Right cardiac atrium (tissue), 5 donors: ENCODE measurements at regions of chr5 and their contacts with region 1.

Region 1: DNA sequence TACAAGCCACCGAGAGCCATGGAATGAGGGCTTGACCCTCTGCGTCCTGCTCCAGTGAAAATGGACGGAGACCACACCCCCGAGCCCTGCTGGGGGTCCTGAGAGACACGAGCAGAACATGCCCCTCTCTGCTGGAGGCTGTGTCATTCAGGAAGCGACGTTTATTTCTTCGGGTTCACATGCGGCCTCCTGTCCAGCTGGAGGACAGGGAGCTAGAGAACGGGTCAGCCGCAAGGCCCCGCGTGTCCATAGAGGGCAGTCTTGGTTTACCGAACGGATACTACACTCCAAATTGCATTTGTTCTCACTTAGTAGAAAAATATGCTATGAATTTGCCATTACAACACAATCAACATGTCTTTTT is 36.1 kb downstream of the MRPL36 start:
- DNase-seq: peak in 2 of 3 donors; percentile 56 to 70
- ATAC-seq: peak; percentile 62 to 70
- H3K4me3 ChIP-seq: no peak overlapping the region
- H3K27ac ChIP-seq: no peak overlapping the region
- H3K4me1 ChIP-seq: no peaks in the 10 kb centered on the region
- H3K27me3 ChIP-seq: no peaks in the 10 kb centered on the region

Region 2: DNA sequence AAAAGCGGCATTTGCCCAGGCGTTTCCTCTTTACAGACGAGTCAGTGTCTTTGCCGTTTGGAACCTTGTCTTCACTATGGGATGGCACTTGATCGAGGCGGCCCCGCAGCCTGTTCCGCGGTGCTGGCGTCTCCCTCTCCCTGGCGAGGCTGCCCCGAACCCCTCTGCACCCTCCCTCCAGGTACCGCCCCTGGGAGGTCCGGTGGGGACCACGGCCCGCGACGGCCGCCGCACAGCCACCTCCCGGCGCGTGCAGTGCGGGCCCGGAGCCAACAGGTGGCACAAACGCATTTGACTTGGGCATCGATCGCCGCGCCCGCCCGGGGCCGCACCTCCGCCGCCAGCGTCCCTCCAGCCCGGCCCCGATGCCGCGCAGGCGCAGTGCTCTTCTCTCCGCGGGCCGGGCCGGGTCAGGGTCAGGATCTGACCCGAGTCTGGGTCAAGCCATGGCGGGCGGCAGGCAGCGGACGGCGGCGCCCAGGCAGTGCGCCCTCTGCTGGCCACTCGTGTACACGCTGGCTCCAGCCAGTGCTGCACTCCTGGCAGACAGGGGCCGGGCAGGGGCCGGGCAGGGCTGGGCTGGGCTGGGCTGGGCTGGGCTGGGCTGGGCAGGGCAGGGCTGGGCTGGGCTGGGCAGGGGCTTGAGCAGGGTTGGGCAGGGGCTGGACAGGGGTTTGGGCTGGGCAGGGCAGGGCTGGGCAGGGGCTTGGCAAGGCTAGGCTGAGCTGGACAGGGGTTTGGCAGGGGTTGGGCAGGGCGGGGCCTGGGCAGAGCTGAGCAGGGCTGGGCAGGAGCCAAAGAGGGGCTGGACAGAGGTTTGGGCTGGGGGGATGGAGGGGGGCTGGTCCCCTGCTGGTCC is 275.0 kb after region 1 on chr5:
- intact Hi-C with region 1: loop called in 3 of 4 experiments (anchors 10 kb)
- DNase-seq: peak; percentile 65 to 90 (median 87)
- ATAC-seq: peak; percentile 94 to 97
- H3K4me3 ChIP-seq: peak overlapping the region; percentile 64
- H3K27ac ChIP-seq: no peak overlapping the region
- H3K4me1 ChIP-seq: no peaks in the 10 kb centered on the region
- H3K27me3 ChIP-seq: no peaks in the 10 kb centered on the region

Region 3: DNA sequence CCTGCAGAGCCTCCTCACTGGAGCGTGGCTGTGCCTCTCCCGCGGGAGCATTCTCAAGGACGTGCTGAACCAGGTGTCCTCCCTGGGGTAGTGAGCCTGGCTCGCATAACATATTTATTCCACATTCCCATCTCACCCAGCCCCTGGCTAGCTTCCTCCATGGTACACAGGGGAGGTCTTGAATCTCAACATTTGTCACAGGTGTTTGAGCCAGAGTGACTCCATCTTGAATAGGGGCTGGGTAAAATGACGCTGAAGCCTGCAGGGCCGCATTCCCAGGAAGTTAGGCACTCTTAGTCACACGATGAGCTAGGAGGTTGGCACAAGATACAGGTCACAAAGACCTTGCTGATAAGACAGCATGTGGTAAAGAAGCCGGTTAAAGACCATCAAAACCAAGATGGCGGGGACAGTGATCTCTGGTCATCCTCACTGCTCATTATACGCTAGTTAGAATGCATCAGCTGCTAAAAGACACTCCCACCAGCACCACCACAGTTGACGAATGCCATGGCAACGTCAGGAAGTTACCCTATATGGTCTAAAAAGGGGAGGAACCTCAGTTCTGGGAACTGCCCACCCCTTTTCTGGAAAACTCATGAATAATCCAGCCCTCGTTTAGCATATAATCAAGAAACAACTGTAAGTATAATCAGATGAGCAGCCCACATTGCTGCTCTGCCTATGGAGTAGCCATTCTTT is 393.0 kb after region 1 on chr5:
- intact Hi-C with region 1: loop called in 1 of 4 experiments (anchors 10 kb)
- DNase-seq: no peak
- ATAC-seq: no peak
- H3K4me3 ChIP-seq: no peak overlapping the region
- H3K27ac ChIP-seq: no peak overlapping the region
- H3K4me1 ChIP-seq: no peaks in the 10 kb centered on the region
- H3K27me3 ChIP-seq: no peaks in the 10 kb centered on the region